PC-9 (cell line): ENCODE measurements at regions of chr5 and their contacts with region 1.

Region 1: GRCh38 chr5:107673368-107674136 is 2.8 kb upstream of the EFNA5 start:
- DNase-seq: peak; percentile 84 to 88
- H3K4me3 ChIP-seq: peak overlapping the region; percentile 72
- H3K27ac ChIP-seq: peak overlapping the region; percentile 90
- H3K4me1 ChIP-seq: peaks cover 17% of the 10 kb centered on the region
- H3K27me3 ChIP-seq: no peaks in the 10 kb centered on the region
- CTCF ChIP-seq: peak; percentile 95

Region 2: GRCh38 chr5:106454651-106455415 is 1218.7 kb before region 1 on chr5:
- CTCF ChIA-PET with region 1: interaction called, 11 read pairs
- POLR2A ChIA-PET with region 1: no interaction called
- intact Hi-C with region 1: no loop called
- DNase-seq: peak; percentile 2 to 81
- H3K4me3 ChIP-seq: no peak overlapping the region
- H3K27ac ChIP-seq: peak overlapping the region; percentile 74
- H3K4me1 ChIP-seq: peaks cover 14% of the 10 kb centered on the region
- H3K27me3 ChIP-seq: no peaks in the 10 kb centered on the region
- CTCF ChIP-seq: peak; percentile 66

Region 3: DNA sequence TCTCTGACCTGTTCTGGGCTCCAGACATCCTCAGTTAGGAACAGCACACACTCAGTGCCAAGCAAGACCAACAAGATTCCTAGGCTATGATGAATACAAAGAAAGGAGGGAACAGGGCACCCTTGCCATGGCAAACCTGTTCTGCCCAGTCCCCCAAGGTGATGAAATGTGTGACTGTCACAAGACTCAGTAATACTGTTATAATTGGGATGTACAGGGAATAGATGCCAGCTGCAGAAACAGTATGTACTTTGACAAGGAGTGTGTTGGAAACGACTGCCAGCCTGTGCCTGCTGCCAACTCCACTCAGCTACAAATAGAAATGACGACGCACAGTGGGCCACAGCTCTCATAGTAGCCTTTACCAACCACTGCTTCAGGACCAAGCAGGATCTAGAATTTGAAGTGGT is 455.8 kb before region 1 on chr5:
- CTCF ChIA-PET with region 1: no interaction called
- POLR2A ChIA-PET with region 1: interaction called, 15 read pairs
- intact Hi-C with region 1: loop called (anchors 1 kb)
- DNase-seq: peak; percentile 76 to 96
- H3K4me3 ChIP-seq: peak overlapping the region; percentile 45; the same call in 1 of the 2 replicates
- H3K27ac ChIP-seq: peak overlapping the region; percentile 96
- H3K4me1 ChIP-seq: peaks cover 53% of the 10 kb centered on the region
- H3K27me3 ChIP-seq: no peaks in the 10 kb centered on the region
- CTCF ChIP-seq: no peak

Region 4: GRCh38 chr5:107455111-107455588 is 218.4 kb before region 1 on chr5:
- CTCF ChIA-PET with region 1: interaction called, 3 read pairs
- POLR2A ChIA-PET with region 1: interaction called, 18 read pairs
- intact Hi-C with region 1: no loop called
- DNase-seq: peak in 1 of 2 experiments; percentile 89
- H3K4me3 ChIP-seq: peak overlapping the region; percentile 13; the same call in 1 of the 2 replicates
- H3K27ac ChIP-seq: peak overlapping the region; percentile 72
- H3K4me1 ChIP-seq: peaks cover 47% of the 10 kb centered on the region
- H3K27me3 ChIP-seq: no peaks in the 10 kb centered on the region
- CTCF ChIP-seq: no peak

Region 5: GRCh38 chr5:107542428-107542827 is 131.1 kb before region 1 on chr5:
- CTCF ChIA-PET with region 1: no interaction called
- POLR2A ChIA-PET with region 1: no interaction called
- intact Hi-C with region 1: loop called (anchors 1 kb)
- DNase-seq: peak; percentile 88 to 97
- H3K4me3 ChIP-seq: peak overlapping the region; percentile 26; the same call in 1 of the 2 replicates
- H3K27ac ChIP-seq: peak overlapping the region; percentile 93
- H3K4me1 ChIP-seq: peaks cover 59% of the 10 kb centered on the region
- H3K27me3 ChIP-seq: no peaks in the 10 kb centered on the region
- CTCF ChIP-seq: no peak